GM12878 (cell line): ENCODE measurements at regions of chr15 and their contacts with region 1.

Region 1: DNA sequence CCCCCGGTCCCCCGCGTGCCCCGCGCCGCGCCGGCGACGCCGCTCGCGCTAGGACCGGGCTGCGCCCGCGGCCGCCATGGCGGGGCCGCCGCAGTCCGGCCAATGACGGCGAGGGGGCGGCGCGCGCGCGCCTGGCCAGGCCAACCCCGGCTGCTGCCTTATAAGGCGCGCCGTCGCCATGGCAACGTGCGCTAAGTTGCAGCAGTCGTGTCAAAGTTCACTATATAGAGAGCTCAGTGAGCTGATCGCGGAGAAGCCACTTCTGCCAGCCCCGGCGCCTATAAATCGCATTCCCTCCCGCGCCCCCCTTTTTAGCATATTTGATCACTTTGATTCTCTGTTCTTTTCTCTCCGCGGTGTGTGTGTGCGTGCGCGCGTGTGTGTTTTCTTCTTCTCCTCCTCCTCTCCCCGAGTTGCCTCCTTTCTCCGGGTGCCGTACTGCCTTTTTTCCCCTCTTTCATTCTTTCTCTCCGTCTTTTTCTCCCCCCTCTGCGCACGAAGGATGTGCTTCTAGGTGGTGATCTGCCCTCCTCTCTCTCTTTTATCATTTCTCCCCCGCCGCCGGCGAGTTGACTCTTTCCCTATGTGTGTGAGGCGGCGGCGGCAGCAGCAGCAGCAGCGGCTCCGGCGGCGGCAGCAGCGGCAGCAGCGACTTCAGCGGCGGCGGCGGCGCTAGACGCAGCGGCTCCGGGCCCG is at the start of gene NR2F2:
- DNase-seq: peak; percentile 53
- ATAC-seq: peak; percentile 70
- H3K4me3 ChIP-seq: peak within 1 kb of the TSS; percentile 78
- H3K27ac ChIP-seq: no peak within 1 kb of the TSS
- H3K4me1 ChIP-seq: peaks cover 6% of the 10 kb centered on the region; the same call in 1 of the 2 replicates
- H3K27me3 ChIP-seq: peaks cover 0 to 14% of the 10 kb centered on the region in 2 experiments; a peak in 1 of 4 replicates
- CTCF ChIP-seq: no peak
- EP300 ChIP-seq: no peak
- POLR2A ChIP-seq: no peak
- RAD21 ChIP-seq: no peak
- polyA plus RNA-seq, gene NR2F2: 2.3 to 3.2 TPM

Region 2: GRCh38 chr15:95826412-95827195 is 504.0 kb before region 1 on chr15:
- CTCF ChIA-PET with region 1: interaction called, 3 read pairs
- POLR2A ChIA-PET with region 1: no interaction called
- RAD21 ChIA-PET with region 1: interaction called, 12 read pairs
- SMC1A ChIA-PET with region 1: interaction called, 9 read pairs
- in situ Hi-C with region 1: no loop called
- intact Hi-C with region 1: no loop called
- DNase-seq: no peak
- ATAC-seq: peak; percentile 77
- H3K4me3 ChIP-seq: no peak overlapping the region
- H3K27ac ChIP-seq: no peak overlapping the region
- H3K4me1 ChIP-seq: no peaks in the 10 kb centered on the region
- H3K27me3 ChIP-seq: no peaks in the 10 kb centered on the region
- CTCF ChIP-seq: peak; percentile 33 to 45 (median 35); a peak in 4 of 6 replicates
- EP300 ChIP-seq: no peak
- POLR2A ChIP-seq: no peak
- RAD21 ChIP-seq: peak; percentile 62

Region 3: DNA sequence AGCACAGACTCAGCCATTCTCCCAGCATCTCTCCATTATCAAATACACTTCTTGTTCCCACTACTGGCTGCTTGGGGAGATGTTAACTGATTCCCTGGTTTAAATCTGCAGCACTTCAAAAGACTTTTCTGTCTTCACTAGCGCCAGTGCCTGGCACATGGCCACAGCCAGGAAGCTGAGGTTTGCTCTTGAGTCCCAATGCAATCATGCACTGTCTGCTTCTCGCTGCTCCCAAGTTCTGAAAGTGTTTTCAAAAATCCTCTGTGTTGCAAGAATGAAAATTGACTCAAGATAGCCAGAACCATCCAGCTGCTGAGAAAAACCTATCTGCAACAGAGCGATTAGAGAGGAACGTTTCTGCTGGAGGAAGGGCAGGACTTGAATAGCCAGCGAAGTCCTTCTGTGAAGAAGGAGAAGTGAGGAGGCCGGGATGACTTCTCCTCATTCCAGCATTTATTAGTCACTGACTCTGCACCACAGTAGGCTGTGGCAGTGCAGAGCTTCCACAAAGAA is 358.5 kb before region 1 on chr15:
- CTCF ChIA-PET with region 1: no interaction called
- POLR2A ChIA-PET with region 1: no interaction called
- RAD21 ChIA-PET with region 1: no interaction called
- SMC1A ChIA-PET with region 1: no interaction called
- in situ Hi-C with region 1: no loop called
- intact Hi-C with region 1: loop called (anchors 5 kb)
- DNase-seq: no peak
- ATAC-seq: no peak
- H3K4me3 ChIP-seq: no peak overlapping the region
- H3K27ac ChIP-seq: no peak overlapping the region
- H3K4me1 ChIP-seq: peaks cover 32% of the 10 kb centered on the region
- H3K27me3 ChIP-seq: no peaks in the 10 kb centered on the region
- CTCF ChIP-seq: no peak
- EP300 ChIP-seq: no peak
- POLR2A ChIP-seq: no peak
- RAD21 ChIP-seq: no peak

Region 4: DNA sequence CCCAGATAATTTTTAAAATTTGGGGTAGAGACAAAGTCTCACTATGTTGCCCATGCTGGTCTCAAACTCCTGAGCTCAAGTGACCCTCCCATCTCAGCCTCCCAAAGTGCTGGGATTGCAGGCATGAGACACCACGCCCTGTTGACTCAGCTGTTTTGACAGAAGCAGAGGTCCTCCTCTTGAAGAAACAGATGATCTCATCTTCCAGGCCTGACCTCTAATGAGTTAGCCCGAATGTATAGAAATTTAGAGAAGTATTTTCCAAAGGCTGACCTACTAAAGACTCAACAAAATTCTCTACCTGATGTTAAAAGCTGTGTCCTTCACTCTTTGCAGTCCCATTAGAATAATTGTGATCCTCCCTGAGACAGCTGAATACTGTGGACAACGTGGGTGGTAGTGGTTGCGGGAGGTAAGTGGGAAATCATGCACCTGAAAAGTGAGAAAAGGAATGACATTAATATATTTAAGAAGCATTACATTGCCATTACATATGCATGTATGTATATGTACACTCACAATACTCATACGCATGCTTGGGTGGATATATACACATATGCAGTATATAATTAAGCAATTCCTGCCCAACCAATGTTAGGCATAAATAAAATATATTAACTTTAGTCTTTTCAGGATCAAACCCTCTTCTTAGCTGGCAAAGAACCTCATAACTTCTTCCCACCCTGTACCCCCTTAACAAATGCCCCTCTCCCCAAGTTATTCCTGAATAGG is 204.7 kb before region 1 on chr15:
- CTCF ChIA-PET with region 1: no interaction called
- POLR2A ChIA-PET with region 1: no interaction called
- RAD21 ChIA-PET with region 1: interaction called, 5 read pairs
- SMC1A ChIA-PET with region 1: no interaction called
- in situ Hi-C with region 1: no loop called
- intact Hi-C with region 1: loop called (anchors 5 kb)
- DNase-seq: no peak
- ATAC-seq: no peak
- H3K4me3 ChIP-seq: no peak overlapping the region
- H3K27ac ChIP-seq: no peak overlapping the region
- H3K4me1 ChIP-seq: peaks cover 12% of the 10 kb centered on the region
- H3K27me3 ChIP-seq: no peaks in the 10 kb centered on the region
- CTCF ChIP-seq: no peak
- EP300 ChIP-seq: no peak
- POLR2A ChIP-seq: no peak
- RAD21 ChIP-seq: no peak

Region 5: DNA sequence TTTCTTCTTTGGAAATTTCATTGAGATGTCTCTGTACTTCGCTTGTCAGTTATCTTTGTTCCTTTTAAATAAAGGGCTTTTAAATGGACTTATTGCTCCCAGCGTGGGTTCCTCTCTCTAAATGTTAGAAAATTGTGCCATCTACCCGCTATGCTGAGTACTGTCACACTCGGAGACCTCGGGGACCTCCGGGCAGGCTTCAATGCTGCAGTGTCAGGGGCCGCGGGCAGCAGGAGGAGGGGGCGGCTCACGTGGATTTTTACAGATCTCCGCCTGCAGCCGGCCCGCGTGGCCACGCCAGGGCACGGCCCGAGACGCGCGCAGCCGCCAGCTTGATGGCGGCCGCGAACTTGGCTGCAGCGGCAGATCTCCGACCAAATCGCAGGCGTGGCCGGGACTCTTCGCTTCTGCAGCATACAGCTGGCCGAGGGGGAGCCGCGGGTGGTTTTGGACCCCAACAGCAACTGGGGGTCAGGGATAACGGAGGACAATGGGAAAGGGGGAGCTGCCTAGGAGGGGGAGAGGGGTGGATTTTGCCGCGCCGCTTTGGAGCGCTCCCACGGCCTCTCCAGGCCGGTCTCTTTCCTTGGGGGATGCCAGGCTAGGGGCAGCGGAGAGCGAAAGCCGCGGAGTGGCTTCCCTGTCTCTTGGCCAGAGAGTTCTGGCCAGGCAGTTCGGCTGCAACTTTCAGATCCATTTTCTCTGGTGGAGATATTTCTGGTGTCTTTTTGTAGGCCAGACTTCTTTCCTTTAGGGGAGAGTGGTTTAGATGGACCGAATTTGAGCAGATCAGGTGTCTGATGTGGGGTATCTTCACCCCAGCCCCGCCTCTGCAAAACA is 15.2 kb after region 1 on chr15:
- CTCF ChIA-PET with region 1: interaction called, 212 read pairs
- POLR2A ChIA-PET with region 1: interaction called, 163 read pairs
- RAD21 ChIA-PET with region 1: interaction called, 252 read pairs
- SMC1A ChIA-PET with region 1: interaction called, 105 read pairs
- in situ Hi-C with region 1: no loop called
- intact Hi-C with region 1: loop called (anchors 1 kb)
- DNase-seq: no peak
- ATAC-seq: peak; percentile 73
- H3K4me3 ChIP-seq: 0 out of 2 replicates have a peak overlapping the region, but pooled peaks have one; percentile 22
- H3K27ac ChIP-seq: no peak overlapping the region
- H3K4me1 ChIP-seq: no peaks in the 10 kb centered on the region
- H3K27me3 ChIP-seq: no peaks in the 10 kb centered on the region
- CTCF ChIP-seq: peak; percentile 59 to 79 (median 68)
- EP300 ChIP-seq: peak in 1 of 2 experiments; percentile 7; a peak in 1 of 4 replicates
- POLR2A ChIP-seq: no peak
- RAD21 ChIP-seq: peak; percentile 84

Region 6: DNA sequence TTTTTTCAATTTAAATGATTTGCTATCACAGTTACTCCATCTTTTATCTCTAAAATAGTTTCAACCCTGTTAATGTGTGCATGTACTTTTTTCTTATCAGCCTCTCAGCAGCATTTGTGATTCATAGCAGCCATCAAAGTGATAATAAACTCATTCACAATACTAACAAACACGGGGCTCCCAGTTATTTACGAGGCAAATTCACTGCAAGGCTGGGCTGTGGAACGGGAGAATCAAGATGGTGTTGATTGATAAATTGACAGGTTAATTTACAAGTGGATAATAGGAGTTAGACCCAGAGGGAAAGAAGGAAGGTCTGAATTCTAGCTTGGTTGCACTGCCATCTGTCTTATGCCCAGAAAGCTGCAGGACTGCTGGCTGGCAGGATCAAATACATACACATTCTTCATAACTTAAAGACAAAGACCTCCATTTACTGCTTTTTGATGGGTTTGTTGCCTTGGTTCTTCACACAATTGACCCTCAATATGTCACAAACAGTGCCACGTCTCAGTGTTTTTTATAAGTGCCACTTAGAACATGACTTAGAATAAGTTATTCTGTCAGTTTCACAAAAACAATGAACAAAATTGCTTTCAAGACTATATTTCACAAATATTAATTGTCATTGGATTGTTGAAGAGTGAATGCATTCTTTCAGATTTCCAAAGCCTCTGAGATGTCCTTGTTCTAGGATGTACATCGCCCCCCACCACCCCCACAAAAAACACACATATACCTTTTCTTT is 562.7 kb after region 1 on chr15:
- CTCF ChIA-PET with region 1: interaction called, 5 read pairs
- POLR2A ChIA-PET with region 1: no interaction called
- RAD21 ChIA-PET with region 1: interaction called, 11 read pairs
- SMC1A ChIA-PET with region 1: interaction called, 9 read pairs
- in situ Hi-C with region 1: no loop called
- intact Hi-C with region 1: loop called (anchors 5 kb)
- DNase-seq: no peak
- ATAC-seq: peak; percentile 79
- H3K4me3 ChIP-seq: no peak overlapping the region
- H3K27ac ChIP-seq: no peak overlapping the region
- H3K4me1 ChIP-seq: no peaks in the 10 kb centered on the region
- H3K27me3 ChIP-seq: no peaks in the 10 kb centered on the region
- CTCF ChIP-seq: peak; percentile 16 to 69 (median 56); a peak in 5 of 6 replicates
- EP300 ChIP-seq: no peak
- POLR2A ChIP-seq: no peak
- RAD21 ChIP-seq: peak; percentile 34; the same call in 1 of the 2 replicates

Region 7: DNA sequence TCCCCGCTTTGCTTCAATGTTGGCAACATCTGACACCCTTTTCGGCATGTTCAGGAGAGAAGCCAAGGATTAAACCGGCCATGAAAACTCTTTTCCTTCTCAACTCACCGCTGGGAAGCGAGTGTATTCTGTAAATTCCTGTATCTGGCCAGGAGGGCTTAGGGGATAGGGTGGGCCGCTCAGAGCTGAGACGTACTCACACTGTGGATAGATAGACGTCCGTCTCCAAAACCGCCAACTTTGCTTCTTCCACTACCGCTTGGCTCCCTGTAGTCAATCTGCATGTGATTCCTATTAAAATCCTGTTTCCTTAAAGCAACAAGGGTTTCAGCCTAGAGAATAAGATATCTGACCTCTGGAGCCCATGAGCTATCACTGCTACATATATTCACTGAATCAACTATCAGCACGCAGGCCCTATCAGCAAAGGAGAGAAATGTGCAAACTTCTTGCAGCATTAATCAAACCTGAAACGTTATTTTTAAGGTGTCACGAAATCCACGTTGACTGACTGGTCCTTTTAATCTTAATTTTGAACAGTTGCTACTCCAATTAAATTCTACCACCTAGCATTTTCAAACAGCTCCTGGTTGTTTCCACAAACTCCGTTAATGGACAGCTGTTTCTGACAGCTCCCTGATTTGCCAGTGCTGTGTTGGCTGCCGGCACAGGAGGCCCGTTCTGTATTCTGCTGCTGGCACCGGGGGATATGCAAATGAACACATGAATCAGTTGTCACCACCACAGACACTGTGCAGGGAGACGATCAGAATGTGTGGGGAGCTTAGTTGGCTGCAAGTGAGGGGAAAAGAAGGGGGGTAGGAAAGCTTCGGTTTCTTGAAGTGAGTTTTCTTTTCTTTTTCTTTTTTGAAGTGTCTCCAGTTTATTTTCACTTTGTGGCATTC is 1191.0 kb after region 1 on chr15:
- CTCF ChIA-PET with region 1: no interaction called
- POLR2A ChIA-PET with region 1: no interaction called
- RAD21 ChIA-PET with region 1: no interaction called
- SMC1A ChIA-PET with region 1: no interaction called
- in situ Hi-C with region 1: no loop called
- intact Hi-C with region 1: no loop called
- DNase-seq: no peak
- ATAC-seq: no peak
- H3K4me3 ChIP-seq: no peak overlapping the region
- H3K27ac ChIP-seq: no peak overlapping the region
- H3K4me1 ChIP-seq: no peaks in the 10 kb centered on the region
- H3K27me3 ChIP-seq: no peaks in the 10 kb centered on the region
- CTCF ChIP-seq: no peak
- EP300 ChIP-seq: no peak
- POLR2A ChIP-seq: no peak
- RAD21 ChIP-seq: no peak